OCI-LY7 (cell line): ENCODE measurements at regions of chr4 and their contacts with region 1.

Region 1: GRCh38 chr4:184851200-184851541 is 25.4 kb upstream of the ACSL1 start:
- DNase-seq: peak; percentile 77
- H3K4me3 ChIP-seq: peak overlapping the region; percentile 48
- H3K27ac ChIP-seq: no peak overlapping the region
- H3K4me1 ChIP-seq: peaks cover 37% of the 10 kb centered on the region
- CTCF ChIP-seq: no peak

Region 2: DNA sequence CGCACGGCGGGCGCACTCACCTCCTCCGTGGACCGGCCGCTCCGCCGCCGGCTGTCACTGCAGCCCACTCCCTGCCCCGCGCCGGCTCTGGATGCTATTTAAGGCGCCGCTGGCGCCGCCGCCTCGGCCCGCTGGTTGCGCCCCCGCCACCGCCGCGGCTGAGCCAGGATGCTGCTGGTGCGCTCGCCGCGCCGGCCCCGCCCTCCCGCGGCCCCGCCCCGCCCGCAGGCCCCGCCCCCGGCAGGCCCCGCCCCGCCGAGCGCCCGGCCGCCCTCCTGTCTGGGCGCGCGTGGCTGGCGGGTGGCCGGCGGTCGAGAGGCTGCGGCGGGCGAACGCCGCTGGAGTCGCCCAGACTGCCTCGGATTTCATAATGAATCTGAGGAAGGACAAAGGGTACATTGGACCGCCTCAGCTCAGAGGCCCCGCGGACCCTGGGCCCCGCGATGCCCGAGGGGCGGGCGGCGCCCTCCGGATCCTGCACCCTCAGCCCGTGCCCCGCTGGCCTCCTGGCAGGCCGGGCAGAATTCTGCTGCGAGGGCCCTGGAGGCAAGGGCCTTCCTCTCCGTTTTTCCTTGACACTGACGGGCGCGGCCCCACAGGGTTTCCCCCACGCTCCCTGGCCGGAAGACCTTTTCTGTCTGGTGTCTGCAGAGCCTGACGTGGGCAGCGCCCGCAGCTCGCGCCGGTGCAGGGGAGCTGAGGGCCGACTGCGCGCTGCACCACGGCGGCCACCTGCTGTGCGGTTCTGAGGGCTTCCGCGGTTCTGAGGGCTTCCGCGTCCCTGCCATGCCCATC is 25.1 kb before region 1 on chr4 and contains the start of gene ACSL1:
- CTCF ChIA-PET with region 1: no interaction called
- POLR2A ChIA-PET with region 1: interaction called, 3 read pairs
- intact Hi-C with region 1: loop called (anchors 1 kb)
- DNase-seq: peak; percentile 85
- H3K4me3 ChIP-seq: peak within 1 kb of the TSS; percentile 96
- H3K27ac ChIP-seq: peak within 1 kb of the TSS; percentile 22
- H3K4me1 ChIP-seq: peaks cover 39% of the 10 kb centered on the region
- CTCF ChIP-seq: no peak
- total RNA-seq, gene ACSL1: 20.8 and 24.3 TPM in 2 replicates